ENCODE measurements at regions of chr5 and their contacts with region 1.

Region 1: DNA sequence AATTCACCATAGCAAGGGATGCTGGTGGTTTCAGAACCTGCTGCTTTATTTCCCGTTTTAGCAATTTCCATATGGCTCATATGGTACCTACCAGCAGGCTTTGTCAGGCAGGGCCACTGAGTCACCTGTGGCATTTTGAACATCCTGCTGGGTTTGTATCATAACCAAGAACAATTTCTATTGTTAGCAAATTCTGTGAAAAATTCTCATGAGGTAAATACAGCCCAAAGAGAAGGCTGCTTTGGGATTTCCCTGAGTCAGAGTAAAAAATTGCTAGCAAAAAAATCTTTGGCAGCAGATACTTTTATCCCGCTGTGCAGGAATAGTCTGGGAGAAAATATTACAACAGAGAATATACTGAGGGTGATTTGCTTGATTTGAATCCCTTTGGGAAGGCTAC is 52.7 kb downstream of the PRR16 start:
- DNase-seq: no peak
- H3K4me3 ChIP-seq: no peak overlapping the region
- CTCF ChIP-seq: no peak
- POLR2A ChIP-seq: no peak

Region 2: DNA sequence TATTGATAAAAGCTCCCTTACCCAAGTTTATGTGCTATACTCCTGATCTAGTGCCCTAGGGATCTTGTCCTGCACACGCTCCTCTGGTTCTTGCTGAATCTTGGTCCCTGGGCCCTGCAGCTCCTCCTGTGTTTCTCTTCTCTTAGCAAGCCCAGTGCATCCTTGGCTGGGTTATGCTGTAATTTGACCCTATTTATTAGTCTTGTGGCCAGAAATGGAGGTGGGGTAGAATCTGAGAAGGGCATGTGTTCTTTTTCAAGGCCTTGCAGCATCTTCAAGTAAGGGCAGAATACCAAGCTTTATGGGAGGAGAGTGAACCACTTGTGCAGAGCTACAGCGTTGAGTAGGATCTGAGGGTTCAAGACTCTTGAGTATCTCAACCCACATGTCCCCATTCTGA is 520.7 kb before region 1 on chr5:
- intact Hi-C with region 1: loop called (anchors 5 kb)
- DNase-seq: no peak
- H3K4me3 ChIP-seq: no peak overlapping the region
- CTCF ChIP-seq: no peak
- POLR2A ChIP-seq: no peak

Region 3: GRCh38 chr5:120225524-120225923 is 291.3 kb before region 1 on chr5:
- intact Hi-C with region 1: no loop called
- DNase-seq: no peak
- H3K4me3 ChIP-seq: no peak overlapping the region
- CTCF ChIP-seq: no peak
- POLR2A ChIP-seq: no peak

Measured in lower leg skin (tissue), 4 donors.